Posterior vena cava (tissue), 2 donors: ENCODE measurements at regions of chr12 and their contacts with region 1.

Region 1: GRCh38 chr12:96343347-96343954 is 56.8 kb downstream of the CDK17 start:
- DNase-seq: no peak

Region 2: GRCh38 chr12:96356831-96357230 is 13.4 kb after region 1 on chr12:
- intact Hi-C with region 1: loop called in 1 of 2 experiments (anchors 1 kb)
- DNase-seq: no peak